Thyroid gland (tissue), 4 donors: ENCODE measurements at regions of chr12 and their contacts with region 1.

Region 1: GRCh38 chr12:68364893-68365725 is 32.9 kb upstream of the MDM1 start:
- DNase-seq: peak; percentile 85 to 88
- H3K4me3 ChIP-seq: peak overlapping the region in 2 of 3 donors; percentile 11 to 25
- H3K27ac ChIP-seq: peak overlapping the region; percentile 46 to 72 (median 62)
- H3K4me1 ChIP-seq: peaks cover 4 to 16% of the 10 kb centered on the region in 2 donors
- H3K27me3 ChIP-seq: no peaks in the 10 kb centered on the region
- CTCF ChIP-seq: no peak
- POLR2A ChIP-seq: peak in 1 of 2 donors; percentile 22

Region 2: DNA sequence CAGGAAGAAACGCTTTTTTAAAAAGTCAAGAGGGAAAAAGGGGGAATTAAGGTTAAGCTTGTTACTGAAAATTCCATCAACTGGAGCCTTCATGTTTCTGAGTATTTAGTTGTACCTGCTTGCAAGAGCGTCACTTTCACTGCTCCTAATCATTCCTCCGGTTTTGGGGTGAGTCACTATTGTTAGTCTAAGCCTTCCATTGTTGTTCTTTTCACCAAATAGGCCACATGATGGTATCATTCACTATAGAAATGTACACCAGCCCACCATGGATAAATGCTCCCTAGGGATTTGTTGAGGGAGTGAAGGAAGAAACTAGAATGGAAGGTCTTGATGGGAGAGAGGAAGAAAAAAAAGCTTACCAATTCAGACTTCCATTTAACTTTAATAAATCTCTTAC is 114.7 kb before region 1 on chr12:
- intact Hi-C with region 1: no loop called
- DNase-seq: no peak
- H3K4me3 ChIP-seq: no peak overlapping the region
- H3K27ac ChIP-seq: no peak overlapping the region
- H3K4me1 ChIP-seq: peaks cover 10 to 12% of the 10 kb centered on the region in 2 donors
- H3K27me3 ChIP-seq: no peaks in the 10 kb centered on the region
- CTCF ChIP-seq: no peak
- POLR2A ChIP-seq: no peak

Region 3: DNA sequence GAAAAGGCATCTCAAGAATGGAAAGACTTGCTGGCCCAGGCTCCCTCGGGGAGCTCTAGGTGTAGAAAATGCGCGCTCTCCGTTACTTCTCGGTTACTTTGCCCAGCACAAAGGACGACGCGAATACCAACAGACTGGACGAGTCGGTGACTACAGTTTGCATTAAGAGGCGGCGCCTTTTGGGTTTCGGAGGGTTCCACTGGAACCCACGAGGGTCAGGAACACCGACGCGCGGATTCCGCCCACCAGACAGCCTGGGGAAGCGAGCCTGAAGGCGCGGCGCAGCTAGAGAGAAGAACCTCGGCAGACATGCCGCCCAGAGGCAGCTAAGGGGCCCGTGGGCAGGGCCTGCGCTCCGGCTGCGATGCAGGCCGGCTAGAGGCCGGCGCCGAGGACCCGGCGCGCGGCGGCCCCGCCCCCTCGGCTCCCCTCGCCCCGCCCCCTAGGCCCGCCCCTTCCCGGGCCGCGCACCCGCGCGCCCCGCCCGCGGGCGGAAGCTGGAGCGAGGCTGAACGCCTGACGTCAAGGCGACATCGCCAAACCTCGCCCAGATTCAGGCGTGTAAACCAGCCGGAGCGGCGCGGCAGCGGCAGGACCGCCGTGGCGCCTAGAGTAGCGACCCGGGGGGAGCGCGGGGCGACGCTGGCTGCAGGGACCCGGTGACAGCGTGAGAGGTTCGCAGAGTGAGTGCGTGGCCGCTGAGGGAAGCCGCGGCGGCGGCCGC is 245.4 kb after region 1 on chr12 and contains the start of gene RAP1B:
- intact Hi-C with region 1: loop called (anchors 10 kb)
- DNase-seq: peak; percentile 86 to 90
- H3K4me3 ChIP-seq: peak within 1 kb of the TSS; percentile 66 to 91 (median 68)
- H3K27ac ChIP-seq: peak within 1 kb of the TSS; percentile 95 to 98 (median 95)
- H3K4me1 ChIP-seq: peaks cover 30 to 39% of the 10 kb centered on the region in 2 donors
- H3K27me3 ChIP-seq: no peaks in the 10 kb centered on the region
- CTCF ChIP-seq: no peak
- POLR2A ChIP-seq: peak; percentile 80 to 96
- total RNA-seq, gene RAP1B: 133 to 232 (median 193) TPM